AG04449 (cell line): ENCODE measurements at regions of chr15 and their contacts with region 1.

Region 1: DNA sequence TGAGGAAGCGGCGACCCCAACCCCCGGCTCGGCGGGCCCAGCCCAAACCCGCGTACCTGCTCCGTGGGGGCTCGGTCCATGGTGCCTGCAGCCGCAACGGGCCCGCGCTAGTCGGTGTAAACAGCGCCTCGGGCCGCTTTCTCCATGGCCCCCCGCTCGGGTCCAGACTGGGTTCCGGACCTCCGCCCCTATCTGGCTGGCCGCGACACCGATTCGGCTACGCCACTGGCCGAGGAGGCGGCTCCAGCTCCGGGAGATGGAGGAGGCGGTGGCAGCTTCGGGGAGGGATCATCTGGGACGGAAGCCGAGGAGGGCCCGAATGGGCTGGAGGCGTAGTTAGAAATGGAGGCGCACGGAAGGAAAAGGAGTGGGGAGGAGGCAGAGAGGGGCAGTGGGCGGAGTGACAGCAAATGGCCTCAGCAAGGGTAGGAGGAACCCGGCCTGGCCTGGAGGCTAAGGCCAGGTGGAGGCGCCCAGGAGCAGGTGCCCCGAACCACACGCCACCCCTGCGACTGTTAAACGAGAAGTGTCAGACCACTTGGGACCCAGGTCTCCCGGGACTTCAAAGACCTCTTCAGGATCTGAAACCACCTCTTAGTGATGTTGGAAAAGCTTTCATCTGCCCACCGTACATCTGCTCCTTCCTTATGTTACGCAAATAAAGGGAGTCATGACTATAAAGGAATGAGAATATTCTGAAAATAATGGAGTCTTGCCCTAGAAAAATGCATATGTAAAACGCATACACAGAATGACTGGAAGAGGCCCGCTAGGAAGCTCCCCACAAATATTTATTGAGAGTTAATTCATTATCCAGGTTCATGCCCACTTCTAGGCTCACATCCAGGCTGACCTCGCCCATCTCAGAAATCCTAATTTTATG is at the start of gene SECISBP2L:
- DNase-seq: peak; percentile 59
- H3K4me3 ChIP-seq: peak within 1 kb of the TSS; percentile 83
- CTCF ChIP-seq: peak; percentile 47

Region 2: DNA sequence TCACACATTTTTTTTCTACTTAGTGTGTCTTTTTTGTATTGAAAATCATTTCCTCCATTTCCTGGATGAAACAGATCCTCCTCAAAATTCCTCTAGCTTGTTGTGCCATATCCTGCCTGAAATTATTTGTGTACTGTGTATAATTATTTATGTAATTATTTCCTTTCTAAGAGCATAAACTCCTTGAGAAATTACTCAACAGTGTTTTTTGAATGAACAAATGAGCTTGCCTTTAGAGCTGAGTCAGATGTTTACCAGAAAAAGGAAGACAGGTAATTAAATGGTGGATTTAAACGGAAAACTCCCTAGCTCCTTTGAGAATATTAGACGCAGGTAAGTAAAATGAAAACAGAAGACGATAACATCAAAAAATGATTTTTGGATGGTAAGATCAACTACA is 13.0 kb after region 1 on chr15:
- CTCF ChIA-PET with region 1: interaction called, 10 read pairs
- POLR2A ChIA-PET with region 1: no interaction called
- DNase-seq: no peak
- H3K4me3 ChIP-seq: no peak overlapping the region
- CTCF ChIP-seq: no peak

Region 3: DNA sequence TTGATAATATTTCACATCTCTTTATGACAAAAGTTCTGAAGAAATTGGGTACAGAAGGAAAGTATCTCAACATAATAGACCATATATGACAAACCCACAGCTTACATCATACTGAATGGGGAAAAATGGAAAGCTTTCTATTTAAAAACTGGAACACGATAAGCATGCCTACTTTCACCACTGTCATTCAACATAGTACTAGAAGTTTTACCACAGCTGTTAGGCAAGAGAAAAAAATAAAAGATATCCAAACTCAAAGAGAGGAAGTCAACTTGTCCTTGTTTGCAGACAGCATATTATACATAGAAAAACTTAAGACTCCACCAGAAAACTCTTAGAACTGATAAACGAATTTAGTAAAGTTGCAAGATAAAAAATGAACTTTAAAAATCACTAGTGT is 68.6 kb after region 1 on chr15:
- CTCF ChIA-PET with region 1: no interaction called
- POLR2A ChIA-PET with region 1: no interaction called
- DNase-seq: no peak
- H3K4me3 ChIP-seq: no peak overlapping the region
- CTCF ChIP-seq: no peak